ENCODE measurements at regions of chr20 and their contacts with region 1.

Region 1: GRCh38 chr20:56468316-56469082 is at the start of gene RTF2:
- DNase-seq: peak; percentile 96 to 98
- ATAC-seq: peak; percentile 99
- H3K4me3 ChIP-seq: peak within 1 kb of the TSS; percentile 88 to 91
- H3K27ac ChIP-seq: peak within 1 kb of the TSS in 1 of 2 donors; percentile 46
- H3K4me1 ChIP-seq: peaks cover 2 to 11% of the 10 kb centered on the region in 2 donors
- H3K27me3 ChIP-seq: no peaks in the 10 kb centered on the region
- total RNA-seq, gene RTF2: 68.1 to 72.6 TPM

Region 2: GRCh38 chr20:56358596-56359211 is 109.8 kb before region 1 on chr20 and contains the start of gene FAM210B:
- intact Hi-C with region 1: loop called in 1 of 2 experiments (anchors 10 kb)
- DNase-seq: peak; percentile 93 to 95
- ATAC-seq: peak; percentile 96
- H3K4me3 ChIP-seq: peak within 1 kb of the TSS; percentile 83 to 90
- H3K27ac ChIP-seq: peak within 1 kb of the TSS in 1 of 2 donors; percentile 18
- H3K4me1 ChIP-seq: no peaks in the 10 kb centered on the region
- H3K27me3 ChIP-seq: no peaks in the 10 kb centered on the region
- total RNA-seq, gene FAM210B: 35.0 to 42.0 TPM

Measured in aorta (tissue), 5 donors.